CD4-positive, alpha-beta T cell (primary cell): ENCODE measurements at regions of chr1 and their contacts with region 1.

Region 1: GRCh38 chr1:78114034-78114956 is 68.5 kb downstream of the GIPC2 start:
- DNase-seq: peak; percentile 12 to 79 (median 36)
- ATAC-seq: peak; percentile 96
- H3K4me3 ChIP-seq: no peak overlapping the region
- H3K4me3 Mint-ChIP-seq: no peak overlapping the region
- H3K27ac ChIP-seq: no peak overlapping the region
- H3K27ac Mint-ChIP-seq: no peak overlapping the region
- H3K4me1 ChIP-seq: no peaks in the 10 kb centered on the region
- H3K4me1 Mint-ChIP-seq: no peaks in the 10 kb centered on the region
- H3K27me3 ChIP-seq: no peaks in the 10 kb centered on the region
- H3K27me3 Mint-ChIP-seq: no peaks in the 10 kb centered on the region
- CTCF ChIP-seq: peak; percentile 97

Region 2: GRCh38 chr1:76330991-76331603 is 1783.2 kb before region 1 on chr1:
- CTCF ChIA-PET with region 1: no interaction called
- POLR2A ChIA-PET with region 1: no interaction called
- intact Hi-C with region 1: loop called in 1 of 2 experiments (anchors 10 kb)
- DNase-seq: peak in 7 of 14 experiments; percentile 1 to 59 (median 43)
- ATAC-seq: peak; percentile 74
- H3K4me3 ChIP-seq: no peak overlapping the region
- H3K4me3 Mint-ChIP-seq: no peak overlapping the region
- H3K27ac ChIP-seq: no peak overlapping the region
- H3K27ac Mint-ChIP-seq: no peak overlapping the region
- H3K4me1 ChIP-seq: no peaks in the 10 kb centered on the region
- H3K4me1 Mint-ChIP-seq: peaks cover 25% of the 10 kb centered on the region
- H3K27me3 ChIP-seq: no peaks in the 10 kb centered on the region
- H3K27me3 Mint-ChIP-seq: no peaks in the 10 kb centered on the region
- CTCF ChIP-seq: peak; percentile 92

Region 3: GRCh38 chr1:77725706-77726105 is 388.6 kb before region 1 on chr1:
- CTCF ChIA-PET with region 1: no interaction called
- POLR2A ChIA-PET with region 1: no interaction called
- intact Hi-C with region 1: loop called (anchors 10 kb)
- DNase-seq: no peak
- ATAC-seq: no peak
- H3K4me3 ChIP-seq: no peak overlapping the region
- H3K4me3 Mint-ChIP-seq: no peak overlapping the region
- H3K27ac ChIP-seq: no peak overlapping the region
- H3K27ac Mint-ChIP-seq: no peak overlapping the region
- H3K4me1 ChIP-seq: no peaks in the 10 kb centered on the region
- H3K4me1 Mint-ChIP-seq: no peaks in the 10 kb centered on the region
- H3K27me3 ChIP-seq: no peaks in the 10 kb centered on the region
- H3K27me3 Mint-ChIP-seq: no peaks in the 10 kb centered on the region
- CTCF ChIP-seq: no peak

Region 4: GRCh38 chr1:77825131-77825709 is 289.1 kb before region 1 on chr1:
- CTCF ChIA-PET with region 1: no interaction called
- POLR2A ChIA-PET with region 1: no interaction called
- intact Hi-C with region 1: loop called (anchors 1 to 5 kb)
- DNase-seq: peak in 3 of 14 experiments; percentile 27 to 53 (median 41)
- ATAC-seq: no peak
- H3K4me3 ChIP-seq: no peak overlapping the region
- H3K4me3 Mint-ChIP-seq: no peak overlapping the region
- H3K27ac ChIP-seq: no peak overlapping the region
- H3K27ac Mint-ChIP-seq: no peak overlapping the region
- H3K4me1 ChIP-seq: no peaks in the 10 kb centered on the region
- H3K4me1 Mint-ChIP-seq: no peaks in the 10 kb centered on the region
- H3K27me3 ChIP-seq: no peaks in the 10 kb centered on the region
- H3K27me3 Mint-ChIP-seq: no peaks in the 10 kb centered on the region
- CTCF ChIP-seq: no peak

Region 5: GRCh38 chr1:77978969-77979876 is 135.1 kb before region 1 on chr1 and contains the start of gene FUBP1:
- CTCF ChIA-PET with region 1: interaction called, 4 read pairs
- POLR2A ChIA-PET with region 1: interaction called, 10 read pairs
- intact Hi-C with region 1: loop called (anchors 1 to 5 kb)
- DNase-seq: peak; percentile 91 to 99 (median 93)
- ATAC-seq: peak; percentile 75
- H3K4me3 ChIP-seq: peak within 1 kb of the TSS; percentile 82
- H3K4me3 Mint-ChIP-seq: no peak within 1 kb of the TSS
- H3K27ac ChIP-seq: peak within 1 kb of the TSS; percentile 99
- H3K27ac Mint-ChIP-seq: no peak within 1 kb of the TSS
- H3K4me1 ChIP-seq: peaks cover 33% of the 10 kb centered on the region
- H3K4me1 Mint-ChIP-seq: peaks cover 44% of the 10 kb centered on the region
- H3K27me3 ChIP-seq: no peaks in the 10 kb centered on the region
- H3K27me3 Mint-ChIP-seq: no peaks in the 10 kb centered on the region
- CTCF ChIP-seq: peak; percentile 70
- total RNA-seq, gene FUBP1: 196 to 202 TPM

Region 6: DNA sequence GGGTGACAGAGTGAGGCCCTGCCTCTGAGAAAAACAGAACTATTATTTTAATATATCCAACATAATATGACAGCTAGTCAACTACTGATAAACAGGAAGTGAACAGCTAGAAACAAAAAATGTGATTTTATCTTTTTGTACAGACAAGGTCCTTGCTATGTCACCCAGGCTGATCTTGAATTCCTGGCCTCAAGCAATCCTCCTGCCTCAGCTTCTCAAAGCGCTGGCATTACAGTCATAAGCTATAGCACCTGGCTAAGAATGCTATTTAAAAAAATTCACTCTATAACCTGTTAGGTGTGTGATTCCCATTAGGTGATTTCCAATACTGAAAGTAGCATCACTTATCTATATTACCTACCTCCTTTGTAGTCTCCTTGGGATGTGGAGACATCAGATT is 85.3 kb before region 1 on chr1:
- CTCF ChIA-PET with region 1: no interaction called
- POLR2A ChIA-PET with region 1: no interaction called
- intact Hi-C with region 1: no loop called
- DNase-seq: no peak
- ATAC-seq: no peak
- H3K4me3 ChIP-seq: no peak overlapping the region
- H3K4me3 Mint-ChIP-seq: no peak overlapping the region
- H3K27ac ChIP-seq: no peak overlapping the region
- H3K27ac Mint-ChIP-seq: no peak overlapping the region
- H3K4me1 ChIP-seq: no peaks in the 10 kb centered on the region
- H3K4me1 Mint-ChIP-seq: no peaks in the 10 kb centered on the region
- H3K27me3 ChIP-seq: no peaks in the 10 kb centered on the region
- H3K27me3 Mint-ChIP-seq: peaks cover 10% of the 10 kb centered on the region
- CTCF ChIP-seq: no peak